Naive thymus-derived CD4-positive, alpha-beta T cell (primary cell): ENCODE measurements at regions of chr11 and their contacts with region 1.

Region 1: GRCh38 chr11:105189581-105189980 is 50.0 kb upstream of the CARD18 start:
- DNase-seq: no peak
- ATAC-seq: peak; percentile 59
- H3K4me3 ChIP-seq: no peak overlapping the region
- H3K4me3 Mint-ChIP-seq: no peak overlapping the region
- H3K27ac ChIP-seq: no peak overlapping the region
- H3K27ac Mint-ChIP-seq: no peak overlapping the region
- H3K4me1 ChIP-seq: no peaks in the 10 kb centered on the region
- H3K4me1 Mint-ChIP-seq: peaks cover 0 to 7% (median 0%) of the 10 kb centered on the region in 7 donors
- H3K27me3 ChIP-seq: no peaks in the 10 kb centered on the region
- H3K27me3 Mint-ChIP-seq: peaks cover 0 to 13% (median 6%) of the 10 kb centered on the region in 5 donors

Region 2: GRCh38 chr11:104484804-104485554 is 704.6 kb before region 1 on chr11:
- CTCF ChIA-PET with region 1: no interaction called
- POLR2A ChIA-PET with region 1: no interaction called
- intact Hi-C with region 1: no loop called
- DNase-seq: no peak
- ATAC-seq: no peak
- H3K4me3 ChIP-seq: no peak overlapping the region
- H3K4me3 Mint-ChIP-seq: no peak overlapping the region
- H3K27ac ChIP-seq: no peak overlapping the region
- H3K27ac Mint-ChIP-seq: no peak overlapping the region
- H3K4me1 ChIP-seq: no peaks in the 10 kb centered on the region
- H3K4me1 Mint-ChIP-seq: no peaks in the 10 kb centered on the region
- H3K27me3 ChIP-seq: no peaks in the 10 kb centered on the region
- H3K27me3 Mint-ChIP-seq: peaks cover 0 to 3% (median 0%) of the 10 kb centered on the region in 5 donors

Region 3: DNA sequence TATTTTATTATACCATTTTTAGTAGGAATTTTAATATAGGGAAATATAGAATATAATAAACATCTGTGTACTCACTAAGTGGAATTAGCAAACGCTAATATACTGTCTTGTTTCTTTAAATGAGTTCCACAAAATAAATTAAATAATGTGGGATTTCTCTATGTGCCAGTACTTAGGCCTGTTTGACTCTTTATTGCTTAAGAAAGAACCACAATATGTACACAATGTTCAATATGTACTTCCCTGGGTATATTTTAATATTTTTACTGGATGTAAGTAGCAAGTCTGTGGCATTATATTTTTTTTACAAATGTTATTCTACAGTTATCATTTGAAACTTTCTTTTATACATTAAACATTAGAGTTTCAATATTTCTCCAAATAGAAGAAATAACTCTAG is 42.4 kb after region 1 on chr11:
- CTCF ChIA-PET with region 1: no interaction called
- POLR2A ChIA-PET with region 1: no interaction called
- intact Hi-C with region 1: loop called in 1 of 2 experiments (anchors 1 kb)
- DNase-seq: no peak
- ATAC-seq: no peak
- H3K4me3 ChIP-seq: no peak overlapping the region
- H3K4me3 Mint-ChIP-seq: no peak overlapping the region
- H3K27ac ChIP-seq: no peak overlapping the region
- H3K27ac Mint-ChIP-seq: no peak overlapping the region
- H3K4me1 ChIP-seq: no peaks in the 10 kb centered on the region
- H3K4me1 Mint-ChIP-seq: no peaks in the 10 kb centered on the region
- H3K27me3 ChIP-seq: no peaks in the 10 kb centered on the region
- H3K27me3 Mint-ChIP-seq: peaks cover 0 to 14% (median 10%) of the 10 kb centered on the region in 5 donors